GM12878 (cell line): ENCODE measurements at regions of chr19 and their contacts with region 1.

Region 1: GRCh38 chr19:36114763-36115452 is at the start of gene POLR2I:
- DNase-seq: peak; percentile 97
- ATAC-seq: peak; percentile 94
- H3K4me3 ChIP-seq: peak within 1 kb of the TSS; percentile 89
- H3K27ac ChIP-seq: peak within 1 kb of the TSS; percentile 80
- H3K4me1 ChIP-seq: peaks cover 9% of the 10 kb centered on the region
- H3K27me3 ChIP-seq: no peaks in the 10 kb centered on the region
- CTCF ChIP-seq: no peak
- EP300 ChIP-seq: no peak
- POLR2A ChIP-seq: peak; percentile 85
- RAD21 ChIP-seq: no peak
- polyA plus RNA-seq, gene POLR2I: 235 to 269 TPM

Region 2: GRCh38 chr19:36054119-36054732 is 60.7 kb before region 1 on chr19 and contains the start of gene THAP8:
- CTCF ChIA-PET with region 1: interaction called, 3 read pairs
- POLR2A ChIA-PET with region 1: interaction called, 3 read pairs
- RAD21 ChIA-PET with region 1: interaction called, 5 read pairs
- SMC1A ChIA-PET with region 1: interaction called, 3 read pairs
- in situ Hi-C with region 1: no loop called
- intact Hi-C with region 1: loop called (anchors 2 kb)
- DNase-seq: peak; percentile 99
- ATAC-seq: peak; percentile 91
- H3K4me3 ChIP-seq: peak within 1 kb of the TSS; percentile 87
- H3K27ac ChIP-seq: peak within 1 kb of the TSS; percentile 92
- H3K4me1 ChIP-seq: peaks cover 3% of the 10 kb centered on the region; the same call in 1 of the 2 replicates
- H3K27me3 ChIP-seq: no peaks in the 10 kb centered on the region
- CTCF ChIP-seq: peak; percentile 45 to 51 (median 50); a peak in 5 of 6 replicates
- EP300 ChIP-seq: no peak
- POLR2A ChIP-seq: peak; percentile 84
- RAD21 ChIP-seq: no peak
- polyA plus RNA-seq, gene THAP8: 0.24 to 0.35 TPM

Region 3: GRCh38 chr19:36139473-36140303 is 24.8 kb after region 1 on chr19 and contains the start of gene CAPNS1:
- CTCF ChIA-PET with region 1: interaction called, 3 read pairs
- POLR2A ChIA-PET with region 1: interaction called, 11 read pairs
- RAD21 ChIA-PET with region 1: no interaction called
- SMC1A ChIA-PET with region 1: interaction called, 3 read pairs
- in situ Hi-C with region 1: no loop called
- intact Hi-C with region 1: no loop called
- DNase-seq: peak; percentile 88
- ATAC-seq: peak; percentile 88
- H3K4me3 ChIP-seq: peak within 1 kb of the TSS; percentile 96
- H3K27ac ChIP-seq: peak within 1 kb of the TSS; percentile 98
- H3K4me1 ChIP-seq: peaks cover 10% of the 10 kb centered on the region; the same call in 1 of the 2 replicates
- H3K27me3 ChIP-seq: no peaks in the 10 kb centered on the region
- CTCF ChIP-seq: 0 out of 6 replicates have a peak, but pooled peaks of 1 of the 3 experiments have one; percentile 11
- EP300 ChIP-seq: peak; percentile 36 to 41; a peak in 2 of 4 replicates
- POLR2A ChIP-seq: peak; percentile 80
- RAD21 ChIP-seq: no peak
- polyA plus RNA-seq, gene CAPNS1: 96.9 to 207 TPM

Region 4: GRCh38 chr19:36214386-36215275 is 99.7 kb after region 1 on chr19 and contains the starts of genes ZNF146 and ZNF565:
- CTCF ChIA-PET with region 1: no interaction called
- POLR2A ChIA-PET with region 1: interaction called, 8 read pairs
- RAD21 ChIA-PET with region 1: no interaction called
- SMC1A ChIA-PET with region 1: interaction called, 11 read pairs
- in situ Hi-C with region 1: no loop called
- intact Hi-C with region 1: loop called (anchors 2 kb)
- DNase-seq: peak; percentile 96
- ATAC-seq: peak; percentile 94
- H3K4me3 ChIP-seq: peak within 1 kb of the TSS; percentile 78
- H3K27ac ChIP-seq: peak within 1 kb of the TSS; percentile 90
- H3K4me1 ChIP-seq: no peaks in the 10 kb centered on the region; the same call in 1 of the 2 replicates
- H3K27me3 ChIP-seq: no peaks in the 10 kb centered on the region
- CTCF ChIP-seq: no peak
- EP300 ChIP-seq: peak in 1 of 2 experiments; percentile 9; a peak in 2 of 4 replicates
- POLR2A ChIP-seq: peak; percentile 95
- RAD21 ChIP-seq: no peak
- polyA plus RNA-seq, gene ZNF146: 20.0 to 37.8 TPM
- polyA plus RNA-seq, gene ZNF565: 0.72 to 1.8 TPM

Region 5: DNA sequence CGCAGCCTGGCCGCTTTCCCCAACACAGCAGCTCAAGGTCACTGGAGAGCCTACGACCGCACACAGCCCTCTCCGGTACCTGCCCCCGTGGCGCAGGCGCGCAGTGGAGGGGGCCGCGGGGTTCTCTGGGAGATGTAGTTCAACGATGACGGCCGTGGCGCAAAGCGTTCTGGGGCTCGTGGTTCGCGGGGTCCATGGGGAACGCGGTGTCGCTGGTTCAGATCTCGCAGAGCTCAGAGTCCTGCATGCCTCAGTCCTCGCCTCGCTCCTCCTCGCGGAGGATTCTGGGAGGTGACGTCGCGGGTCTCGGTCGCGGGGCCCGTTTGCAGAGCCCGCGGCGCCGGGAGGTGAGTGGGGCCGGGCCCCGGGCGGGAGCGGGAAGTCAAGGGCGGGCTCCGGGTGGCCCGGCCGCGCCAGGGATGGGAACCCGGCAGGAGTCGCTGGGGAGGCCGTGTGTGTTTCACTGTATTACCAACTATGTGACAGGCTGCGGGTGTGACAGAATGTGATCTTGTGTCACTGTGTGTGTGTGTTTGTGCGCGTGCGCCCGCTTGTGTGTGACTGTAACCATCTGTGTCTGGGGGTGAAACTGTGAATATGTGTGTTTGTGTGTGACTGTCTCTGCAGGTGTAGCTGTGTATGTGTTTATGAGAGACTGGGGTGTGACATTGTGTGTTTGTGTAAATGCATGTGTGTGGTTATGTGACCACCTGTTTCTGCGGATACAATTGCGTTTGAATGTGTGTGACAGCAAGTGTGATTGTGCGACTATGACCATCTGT is 1256.2 kb after region 1 on chr19 and contains the start of gene ZNF527:
- CTCF ChIA-PET with region 1: no interaction called
- POLR2A ChIA-PET with region 1: no interaction called
- RAD21 ChIA-PET with region 1: no interaction called
- SMC1A ChIA-PET with region 1: no interaction called
- in situ Hi-C with region 1: no loop called
- intact Hi-C with region 1: loop called (anchors 10 kb)
- DNase-seq: peak; percentile 91
- ATAC-seq: peak; percentile 99
- H3K4me3 ChIP-seq: peak within 1 kb of the TSS; percentile 72
- H3K27ac ChIP-seq: peak within 1 kb of the TSS; percentile 63
- H3K4me1 ChIP-seq: no peaks in the 10 kb centered on the region
- H3K27me3 ChIP-seq: no peaks in the 10 kb centered on the region
- CTCF ChIP-seq: no peak
- EP300 ChIP-seq: no peak
- POLR2A ChIP-seq: peak; percentile 92
- RAD21 ChIP-seq: no peak
- polyA plus RNA-seq, gene ZNF527: 2.0 to 2.2 TPM